Activated CD4-positive, alpha-beta T cell treated with anti-CD3 and anti-CD28 coated beads, Interleukin-2, amount 10 ng/mL, durations not matched to agents 24 days and 14 days (primary cell): ENCODE measurements at regions of chr15 and their contacts with region 1.

Region 1: DNA sequence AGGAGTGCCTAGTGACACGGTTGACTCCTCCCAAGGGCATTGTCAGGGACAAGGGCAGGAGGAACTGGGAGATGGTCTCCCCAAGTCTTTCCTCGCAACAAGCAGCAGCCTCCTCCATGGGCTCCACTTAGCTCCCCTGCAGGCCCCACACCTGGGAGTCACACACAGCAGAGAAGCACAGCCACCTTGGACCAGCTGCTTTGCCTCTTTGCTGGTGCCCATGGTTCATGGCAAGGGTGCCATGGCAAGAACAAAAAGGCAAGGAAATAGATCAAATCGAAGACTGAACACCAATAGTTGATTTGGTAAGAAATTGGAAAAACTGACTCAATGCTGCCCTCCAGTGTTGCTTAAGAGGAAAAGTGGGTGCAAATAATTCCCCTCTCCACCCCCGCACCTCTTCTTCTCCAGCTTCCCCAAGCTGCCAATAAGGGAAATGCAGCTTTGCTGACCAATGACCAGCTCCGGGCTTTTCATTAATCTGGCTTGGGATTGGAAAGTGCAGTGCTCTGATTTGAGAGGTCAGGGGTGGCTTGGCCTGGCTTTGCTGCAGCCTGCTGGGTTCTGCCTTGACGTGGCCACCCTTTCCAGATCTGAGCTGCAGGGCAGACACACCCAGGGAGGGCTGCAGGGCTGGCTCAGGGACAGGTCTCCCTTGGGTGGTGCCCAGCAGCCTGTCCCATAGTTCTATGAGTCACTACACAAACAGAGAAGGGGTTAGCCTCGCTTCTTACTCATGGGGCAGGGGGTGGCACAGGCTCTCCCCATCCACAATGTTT is 162.0 kb downstream of the KLF13 start:
- DNase-seq: peak; percentile 82
- H3K4me3 Mint-ChIP-seq: peak overlapping the region; percentile 41
- H3K27ac Mint-ChIP-seq: peak overlapping the region; percentile 84
- H3K4me1 Mint-ChIP-seq: peaks cover 67% of the 10 kb centered on the region
- H3K27me3 Mint-ChIP-seq: no peaks in the 10 kb centered on the region

Region 2: GRCh38 chr15:30991255-30992072 is 497.2 kb before region 1 on chr15 and contains the start of gene MTMR10:
- intact Hi-C with region 1: loop called (anchors 5 kb)
- DNase-seq: peak; percentile 94
- H3K4me3 Mint-ChIP-seq: peak within 1 kb of the TSS; percentile 95
- H3K27ac Mint-ChIP-seq: peak within 1 kb of the TSS; percentile 94
- H3K4me1 Mint-ChIP-seq: peaks cover 22% of the 10 kb centered on the region
- H3K27me3 Mint-ChIP-seq: peaks cover 14% of the 10 kb centered on the region
- total RNA-seq, gene MTMR10: 11.3 and 12.3 TPM in 2 replicates

Region 3: DNA sequence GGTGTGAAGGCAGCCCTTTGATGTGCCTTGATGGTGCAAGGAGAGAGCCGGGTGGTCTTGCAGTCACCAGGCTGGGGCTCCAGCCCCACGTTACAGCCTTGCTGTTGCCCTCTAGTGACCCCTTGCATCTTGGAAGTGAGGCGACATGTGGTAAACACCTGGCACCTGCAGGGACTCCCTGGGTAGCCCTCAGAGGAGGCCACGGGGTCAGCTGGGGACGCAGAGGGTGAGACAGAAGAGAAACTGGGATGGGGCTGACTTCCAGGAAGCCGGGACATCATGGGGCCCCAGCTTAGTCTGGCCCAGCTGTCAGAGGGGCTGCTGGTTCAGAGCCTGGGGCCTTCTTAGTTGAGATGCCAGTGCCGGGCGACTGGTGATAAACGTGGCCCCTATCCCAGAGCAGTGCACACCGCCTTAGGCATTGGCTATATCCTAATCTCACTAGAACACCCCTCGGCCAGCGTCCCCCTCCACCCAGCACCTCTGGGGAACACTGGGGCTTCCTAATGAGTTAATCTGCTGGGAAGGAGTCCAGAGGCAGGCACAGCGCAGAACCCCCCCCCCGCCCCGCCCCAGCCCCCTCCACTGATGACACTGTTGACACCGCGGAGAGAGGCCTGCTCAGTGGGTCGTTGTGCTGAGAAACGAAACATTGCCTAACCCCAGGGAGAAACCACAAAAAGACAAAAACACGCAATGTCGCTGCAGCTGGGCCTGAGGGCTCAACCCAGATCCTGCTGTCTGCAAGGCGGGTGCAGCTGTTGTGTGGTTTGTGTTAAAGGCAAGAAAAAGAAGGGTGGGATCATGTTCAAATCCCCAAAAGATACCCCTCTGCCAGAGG is 222.5 kb before region 1 on chr15:
- intact Hi-C with region 1: loop called (anchors 5 kb)
- DNase-seq: peak; percentile 94
- H3K4me3 Mint-ChIP-seq: peak overlapping the region; percentile 68
- H3K27ac Mint-ChIP-seq: peak overlapping the region; percentile 78
- H3K4me1 Mint-ChIP-seq: peaks cover 87% of the 10 kb centered on the region
- H3K27me3 Mint-ChIP-seq: no peaks in the 10 kb centered on the region

Region 4: GRCh38 chr15:31365655-31366127 is 122.9 kb before region 1 on chr15:
- intact Hi-C with region 1: loop called (anchors 2 kb)
- DNase-seq: peak; percentile 93
- H3K4me3 Mint-ChIP-seq: peak overlapping the region; percentile 83
- H3K27ac Mint-ChIP-seq: peak overlapping the region; percentile 98
- H3K4me1 Mint-ChIP-seq: peaks cover 94% of the 10 kb centered on the region
- H3K27me3 Mint-ChIP-seq: no peaks in the 10 kb centered on the region

Region 5: DNA sequence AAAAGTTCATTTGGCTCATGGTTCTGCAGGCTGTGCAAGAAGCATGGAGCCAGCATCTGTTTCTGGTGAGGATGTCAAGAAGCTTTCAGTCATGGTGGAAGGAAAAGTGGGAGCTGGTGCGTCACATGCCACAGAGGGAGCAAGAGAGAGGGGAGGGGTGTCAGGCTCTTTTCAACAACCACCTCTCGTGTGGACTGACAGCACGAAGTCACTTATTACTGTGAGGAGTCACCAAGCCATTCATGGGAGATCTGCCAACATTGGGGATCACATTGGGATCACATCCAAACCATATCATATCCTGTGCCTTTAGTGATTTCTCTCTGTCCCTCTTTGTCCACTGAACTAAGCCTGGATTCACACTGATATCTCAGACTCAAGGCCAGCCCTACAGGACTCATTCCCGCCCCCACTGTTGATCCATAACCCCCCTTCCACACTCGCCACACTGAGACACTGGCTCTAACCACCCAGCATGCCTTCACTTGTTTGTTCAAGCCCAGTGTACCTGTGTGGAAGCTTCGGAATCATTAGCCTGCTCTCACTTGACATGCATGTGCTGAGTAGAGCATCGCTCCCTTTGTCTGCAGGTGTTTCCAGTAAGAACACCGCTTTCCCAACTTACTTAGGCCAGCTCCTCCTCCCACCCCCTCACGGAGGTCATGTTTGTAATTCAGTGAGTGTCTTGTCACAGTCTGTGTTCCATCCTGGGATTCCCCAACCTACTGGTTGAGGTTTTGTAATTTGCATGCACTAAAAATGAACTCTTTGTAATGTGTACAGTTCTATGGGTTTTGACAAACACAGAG is 29.8 kb before region 1 on chr15:
- intact Hi-C with region 1: loop called (anchors 1 kb)
- DNase-seq: peak; percentile 85
- H3K4me3 Mint-ChIP-seq: peak overlapping the region; percentile 81
- H3K27ac Mint-ChIP-seq: peak overlapping the region; percentile 96
- H3K4me1 Mint-ChIP-seq: peaks cover 28% of the 10 kb centered on the region
- H3K27me3 Mint-ChIP-seq: no peaks in the 10 kb centered on the region